ENCODE measurements at regions of chr3 and their contacts with region 1.

Region 1: GRCh38 chr3:182683453-182683852 is 109.9 kb upstream of the ATP11B start:
- DNase-seq: peak; percentile 75
- H3K4me3 ChIP-seq: no peak overlapping the region; a peak in 1 of 4 replicates
- H3K27ac ChIP-seq: no peak overlapping the region
- H3K4me1 ChIP-seq: no peaks in the 10 kb centered on the region; a peak in 1 of 4 replicates
- H3K27me3 ChIP-seq: no peaks in the 10 kb centered on the region
- CTCF ChIP-seq: peak; percentile 96
- EP300 ChIP-seq: no peak
- RAD21 ChIP-seq: peak; percentile 98

Region 2: GRCh38 chr3:181709537-181710279 is 973.7 kb before region 1 on chr3:
- CTCF ChIA-PET with region 1: interaction called, 32 read pairs
- POLR2A ChIA-PET with region 1: no interaction called
- DNase-seq: peak; percentile 72
- H3K4me3 ChIP-seq: peak overlapping the region in 1 of 2 experiments; percentile 37; a peak in 1 of 4 replicates
- H3K27ac ChIP-seq: no peak overlapping the region
- H3K4me1 ChIP-seq: peaks cover 0 to 13% of the 10 kb centered on the region in 2 experiments; a peak in 1 of 4 replicates
- H3K27me3 ChIP-seq: peaks cover 14% of the 10 kb centered on the region; the same call in 1 of the 2 replicates
- CTCF ChIP-seq: peak; percentile 90
- EP300 ChIP-seq: no peak
- RAD21 ChIP-seq: peak; percentile 88

Region 3: DNA sequence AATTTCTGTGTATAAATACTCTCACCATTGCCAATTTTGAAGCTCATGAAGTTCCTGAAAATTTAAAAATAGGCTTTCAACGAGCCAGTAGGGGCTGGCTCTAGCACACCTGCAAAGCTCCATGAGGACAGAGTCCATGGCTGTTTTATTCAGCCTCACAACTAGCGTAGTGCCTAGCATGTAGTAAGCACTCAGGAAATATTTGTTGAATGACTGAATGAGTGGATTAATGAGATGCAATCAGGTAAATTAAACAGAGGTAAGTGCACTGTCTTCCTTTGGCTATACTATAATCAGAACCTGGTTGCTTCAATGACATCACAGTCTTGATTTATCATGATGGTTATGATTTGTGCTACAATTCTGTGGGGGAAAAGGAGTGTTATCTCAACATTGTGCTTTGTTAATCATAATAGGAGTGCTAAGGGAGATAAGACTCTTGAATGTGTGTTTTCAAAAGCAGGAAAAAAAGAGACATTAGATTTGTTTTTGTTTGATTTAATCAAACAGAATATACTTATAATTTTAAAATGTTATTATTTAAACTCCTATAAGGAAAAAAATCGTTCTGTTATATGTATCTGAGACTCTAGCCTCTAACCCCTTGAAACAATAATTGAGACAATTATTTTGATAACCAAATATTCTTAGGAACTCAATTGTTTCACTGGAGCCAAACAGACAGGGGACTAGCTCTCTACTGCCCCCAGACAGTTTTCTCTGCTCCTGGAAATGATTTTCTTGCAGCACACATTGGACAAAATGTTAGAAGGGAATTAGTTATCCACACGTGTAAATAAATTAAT is 61.8 kb before region 1 on chr3:
- CTCF ChIA-PET with region 1: interaction called, 19 read pairs
- POLR2A ChIA-PET with region 1: no interaction called
- DNase-seq: peak; percentile 26
- H3K4me3 ChIP-seq: no peak overlapping the region
- H3K27ac ChIP-seq: no peak overlapping the region
- H3K4me1 ChIP-seq: no peaks in the 10 kb centered on the region; a peak in 1 of 4 replicates
- H3K27me3 ChIP-seq: no peaks in the 10 kb centered on the region
- CTCF ChIP-seq: peak; percentile 44
- EP300 ChIP-seq: no peak
- RAD21 ChIP-seq: peak; percentile 50

Region 4: DNA sequence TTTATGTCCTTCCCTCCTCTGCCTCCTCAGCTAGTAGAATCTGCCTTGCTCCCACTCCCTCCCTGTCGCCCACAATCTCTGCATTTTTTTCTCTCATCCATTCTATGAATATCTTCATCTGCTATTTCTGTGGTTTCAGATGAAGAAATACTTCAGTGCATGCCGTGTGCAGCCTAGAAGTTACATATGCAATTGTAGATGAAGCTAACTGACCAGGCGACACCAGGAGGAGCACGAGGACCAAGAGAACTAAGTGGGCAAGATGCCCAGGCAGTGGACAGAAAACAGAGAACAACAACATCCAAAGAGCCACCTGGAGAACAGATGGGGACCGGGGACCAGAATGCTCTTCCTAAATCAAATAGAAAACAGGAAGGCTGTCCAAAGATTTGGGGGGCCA is 11.5 kb before region 1 on chr3:
- CTCF ChIA-PET with region 1: interaction called, 12 read pairs
- POLR2A ChIA-PET with region 1: no interaction called
- DNase-seq: peak; percentile 63
- H3K4me3 ChIP-seq: no peak overlapping the region
- H3K27ac ChIP-seq: no peak overlapping the region
- H3K4me1 ChIP-seq: peaks cover 0 to 6% of the 10 kb centered on the region in 2 experiments; a peak in 1 of 4 replicates
- H3K27me3 ChIP-seq: no peaks in the 10 kb centered on the region
- CTCF ChIP-seq: no peak
- EP300 ChIP-seq: no peak
- RAD21 ChIP-seq: peak; percentile 53